Naive thymus-derived CD4-positive, alpha-beta T cell (primary cell): ENCODE measurements at regions of chr11 and their contacts with region 1.

Region 1: DNA sequence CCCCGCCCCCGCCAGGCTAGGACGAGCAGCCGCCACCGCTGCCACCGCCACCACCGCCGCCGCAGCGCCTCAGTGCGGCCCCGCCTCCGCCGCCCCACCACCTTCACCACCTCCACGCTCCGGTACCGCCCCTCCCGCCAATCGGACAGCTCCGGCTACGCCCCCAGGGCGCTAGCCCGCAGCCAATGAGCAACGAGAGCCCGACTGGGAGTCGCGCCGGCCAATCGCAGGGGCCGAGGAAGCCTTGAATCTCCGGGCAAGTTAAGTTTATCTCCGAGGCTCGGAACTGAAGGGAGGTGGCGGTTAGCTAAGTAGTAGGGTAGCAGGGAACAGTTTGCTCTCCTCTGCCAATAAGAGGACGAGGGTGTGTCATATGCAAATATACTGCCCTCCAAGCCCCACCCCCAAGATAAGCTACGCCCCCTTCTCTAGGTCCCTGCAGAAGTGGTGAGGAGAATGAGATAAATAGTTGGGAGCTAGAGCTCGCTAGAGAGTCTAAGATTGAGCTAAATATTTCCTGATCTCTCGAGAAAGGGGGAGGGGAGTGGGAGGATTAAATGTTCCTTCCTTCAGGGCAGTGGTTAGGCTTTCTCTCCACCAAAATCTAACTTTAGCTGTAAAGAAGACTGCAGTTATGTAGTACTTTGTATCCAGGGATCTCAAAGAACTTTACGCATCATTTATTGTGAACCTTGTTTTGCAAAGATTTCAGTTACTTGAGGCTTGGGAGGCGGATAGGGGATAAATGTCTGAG is at the start of gene SESN3:
- DNase-seq: peak; percentile 96 to 100 (median 99)
- ATAC-seq: peak; percentile 92
- H3K4me3 ChIP-seq: peak within 1 kb of the TSS; percentile 82
- H3K4me3 Mint-ChIP-seq: peak within 1 kb of the TSS in 6 of 10 donors; percentile 93 to 98 (median 96)
- H3K27ac ChIP-seq: peak within 1 kb of the TSS; percentile 77
- H3K27ac Mint-ChIP-seq: peak within 1 kb of the TSS; percentile 35 to 97 (median 90)
- H3K4me1 ChIP-seq: peaks cover 16 to 24% of the 10 kb centered on the region in 2 donors
- H3K4me1 Mint-ChIP-seq: peaks cover 37 to 71% (median 50%) of the 10 kb centered on the region in 7 donors
- H3K27me3 ChIP-seq: no peaks in the 10 kb centered on the region
- H3K27me3 Mint-ChIP-seq: peaks cover 0 to 5% (median 0%) of the 10 kb centered on the region in 5 donors
- total RNA-seq, gene SESN3: 77.5 to 262 (median 133) TPM

Region 2: DNA sequence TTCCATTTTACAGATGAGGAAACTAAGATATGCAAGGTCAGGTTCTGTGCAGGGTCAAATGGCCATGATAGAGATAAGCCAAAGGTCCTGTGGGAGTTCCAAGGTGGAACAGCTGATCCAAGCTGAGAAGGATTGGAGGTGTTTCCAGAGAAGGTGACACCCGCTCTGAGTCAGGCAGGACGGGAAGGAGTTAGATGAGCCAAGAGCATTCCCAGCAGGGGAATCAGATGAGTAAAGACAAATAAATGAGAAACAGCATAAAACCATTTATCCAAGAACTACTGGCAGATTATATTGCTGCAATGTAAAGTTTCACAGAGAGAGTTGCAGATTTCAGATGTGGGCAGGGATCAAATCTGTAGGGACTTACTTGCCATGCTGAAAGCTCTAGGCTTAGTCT is 1229.1 kb before region 1 on chr11:
- CTCF ChIA-PET with region 1: no interaction called
- POLR2A ChIA-PET with region 1: no interaction called
- intact Hi-C with region 1: no loop called
- DNase-seq: no peak
- ATAC-seq: no peak
- H3K4me3 ChIP-seq: no peak overlapping the region
- H3K4me3 Mint-ChIP-seq: no peak overlapping the region
- H3K27ac ChIP-seq: no peak overlapping the region
- H3K27ac Mint-ChIP-seq: no peak overlapping the region
- H3K4me1 ChIP-seq: no peaks in the 10 kb centered on the region
- H3K4me1 Mint-ChIP-seq: no peaks in the 10 kb centered on the region
- H3K27me3 ChIP-seq: no peaks in the 10 kb centered on the region
- H3K27me3 Mint-ChIP-seq: peaks cover 0 to 10% (median 9%) of the 10 kb centered on the region in 5 donors

Region 3: GRCh38 chr11:95067039-95067840 is 164.1 kb before region 1 on chr11:
- CTCF ChIA-PET with region 1: no interaction called
- POLR2A ChIA-PET with region 1: interaction called, 22 read pairs
- intact Hi-C with region 1: loop called (anchors 1 kb)
- DNase-seq: peak; percentile 62 to 79 (median 74)
- ATAC-seq: peak; percentile 81
- H3K4me3 ChIP-seq: peak overlapping the region; percentile 87
- H3K4me3 Mint-ChIP-seq: peak overlapping the region; percentile 93 to 100 (median 96)
- H3K27ac ChIP-seq: peak overlapping the region; percentile 96
- H3K27ac Mint-ChIP-seq: peak overlapping the region; percentile 93 to 100 (median 97)
- H3K4me1 ChIP-seq: peaks cover 16 to 17% of the 10 kb centered on the region in 2 donors
- H3K4me1 Mint-ChIP-seq: peaks cover 17 to 38% (median 30%) of the 10 kb centered on the region in 7 donors
- H3K27me3 ChIP-seq: no peaks in the 10 kb centered on the region
- H3K27me3 Mint-ChIP-seq: peaks cover 0 to 23% (median 0%) of the 10 kb centered on the region in 5 donors

Region 4: DNA sequence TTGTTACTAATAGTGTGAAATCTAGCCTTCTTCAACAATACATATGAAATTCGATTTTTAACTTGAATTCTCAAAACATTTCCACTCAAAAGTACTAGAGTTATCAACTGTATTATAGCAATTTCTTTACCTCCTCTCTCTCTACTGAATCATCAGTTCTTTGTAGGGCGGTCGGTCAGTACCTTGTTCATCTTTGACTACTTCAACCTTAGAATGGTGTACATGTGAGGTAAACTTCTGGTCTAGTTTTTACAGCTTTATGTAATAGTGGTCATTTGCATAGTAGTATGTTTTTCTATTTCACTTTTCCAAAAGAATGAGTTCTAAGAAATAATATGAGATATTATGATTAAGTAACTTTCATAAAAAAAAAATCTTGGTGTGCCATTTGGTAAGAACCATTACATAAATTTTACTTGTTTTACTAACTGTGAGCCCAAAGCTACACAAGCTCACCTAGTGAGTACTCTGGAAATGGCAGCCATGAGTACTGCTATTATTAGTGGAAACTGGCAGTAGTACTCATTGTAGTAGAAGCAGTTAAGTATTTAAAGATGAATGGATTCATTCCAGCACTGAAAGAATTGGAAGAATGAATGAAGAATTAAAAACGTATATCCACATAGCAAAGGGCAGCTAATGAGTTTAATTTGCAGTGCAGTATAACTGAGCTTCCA is 30.4 kb before region 1 on chr11:
- CTCF ChIA-PET with region 1: no interaction called
- POLR2A ChIA-PET with region 1: interaction called, 8 read pairs
- intact Hi-C with region 1: loop called in 1 of 2 experiments (anchors 1 kb)
- DNase-seq: no peak
- ATAC-seq: no peak
- H3K4me3 ChIP-seq: no peak overlapping the region
- H3K4me3 Mint-ChIP-seq: peak overlapping the region in 1 of 10 donors; percentile 14
- H3K27ac ChIP-seq: no peak overlapping the region
- H3K27ac Mint-ChIP-seq: peak overlapping the region in 2 of 9 donors; percentile 14 to 68
- H3K4me1 ChIP-seq: peaks cover 0 to 11% of the 10 kb centered on the region in 2 donors
- H3K4me1 Mint-ChIP-seq: peaks cover 17 to 85% (median 66%) of the 10 kb centered on the region in 7 donors
- H3K27me3 ChIP-seq: no peaks in the 10 kb centered on the region
- H3K27me3 Mint-ChIP-seq: no peaks in the 10 kb centered on the region

Region 5: GRCh38 chr11:95296621-95297025 is 65.3 kb after region 1 on chr11:
- CTCF ChIA-PET with region 1: no interaction called
- POLR2A ChIA-PET with region 1: interaction called, 17 read pairs
- intact Hi-C with region 1: loop called (anchors 1 to 5 kb)
- DNase-seq: no peak
- ATAC-seq: peak; percentile 78
- H3K4me3 ChIP-seq: no peak overlapping the region
- H3K4me3 Mint-ChIP-seq: peak overlapping the region in 1 of 10 donors; percentile 5
- H3K27ac ChIP-seq: no peak overlapping the region
- H3K27ac Mint-ChIP-seq: no peak overlapping the region
- H3K4me1 ChIP-seq: peaks cover 0 to 27% of the 10 kb centered on the region in 2 donors
- H3K4me1 Mint-ChIP-seq: peaks cover 26 to 47% (median 32%) of the 10 kb centered on the region in 7 donors
- H3K27me3 ChIP-seq: no peaks in the 10 kb centered on the region
- H3K27me3 Mint-ChIP-seq: peaks cover 0 to 4% (median 0%) of the 10 kb centered on the region in 5 donors

Region 6: DNA sequence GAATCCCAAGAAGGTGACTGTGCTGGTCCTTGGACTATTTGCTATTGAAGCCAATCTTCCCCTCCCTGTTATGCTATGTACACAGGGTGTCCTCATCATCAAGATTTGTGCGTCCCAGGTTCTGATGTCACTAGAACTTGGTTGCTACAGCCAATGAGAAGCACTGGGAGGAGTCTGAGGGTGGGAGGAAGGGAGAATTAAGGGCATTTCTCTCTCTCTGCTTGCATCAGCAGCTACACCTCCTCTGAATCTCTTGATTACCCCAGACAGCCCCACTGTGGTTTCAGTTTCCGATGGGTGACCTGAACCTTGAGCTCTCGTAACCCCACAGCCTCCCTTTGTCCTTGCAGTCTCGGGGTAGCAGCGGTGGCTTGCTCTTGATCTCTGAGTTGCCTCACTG is 212.1 kb after region 1 on chr11:
- CTCF ChIA-PET with region 1: no interaction called
- POLR2A ChIA-PET with region 1: interaction called, 3 read pairs
- intact Hi-C with region 1: loop called in 1 of 2 experiments (anchors 10 kb)
- DNase-seq: no peak
- ATAC-seq: peak; percentile 57
- H3K4me3 ChIP-seq: no peak overlapping the region
- H3K4me3 Mint-ChIP-seq: no peak overlapping the region
- H3K27ac ChIP-seq: no peak overlapping the region
- H3K27ac Mint-ChIP-seq: peak overlapping the region in 2 of 9 donors; percentile 21 to 31
- H3K4me1 ChIP-seq: no peaks in the 10 kb centered on the region
- H3K4me1 Mint-ChIP-seq: peaks cover 7 to 20% (median 12%) of the 10 kb centered on the region in 7 donors
- H3K27me3 ChIP-seq: no peaks in the 10 kb centered on the region
- H3K27me3 Mint-ChIP-seq: no peaks in the 10 kb centered on the region

Region 7: GRCh38 chr11:95699631-95700470 is 468.5 kb after region 1 on chr11:
- CTCF ChIA-PET with region 1: interaction called, 46 read pairs
- POLR2A ChIA-PET with region 1: interaction called, 118 read pairs
- intact Hi-C with region 1: loop called (anchors 1 kb)
- DNase-seq: peak in 7 of 9 donors; percentile 41 to 67 (median 49)
- ATAC-seq: peak; percentile 78
- H3K4me3 ChIP-seq: peak overlapping the region; percentile 36
- H3K4me3 Mint-ChIP-seq: peak overlapping the region; percentile 68 to 87 (median 76)
- H3K27ac ChIP-seq: peak overlapping the region; percentile 85
- H3K27ac Mint-ChIP-seq: peak overlapping the region in 8 of 9 donors; percentile 95 to 99 (median 96)
- H3K4me1 ChIP-seq: peaks cover 42 to 72% of the 10 kb centered on the region in 2 donors
- H3K4me1 Mint-ChIP-seq: peaks cover 32 to 65% (median 61%) of the 10 kb centered on the region in 7 donors
- H3K27me3 ChIP-seq: no peaks in the 10 kb centered on the region
- H3K27me3 Mint-ChIP-seq: no peaks in the 10 kb centered on the region

Region 8: GRCh38 chr11:96389720-96390487 is 1158.6 kb after region 1 on chr11 and contains the starts of genes CCDC82 and JRKL:
- CTCF ChIA-PET with region 1: no interaction called
- POLR2A ChIA-PET with region 1: interaction called, 5 read pairs
- intact Hi-C with region 1: loop called (anchors 1 kb)
- DNase-seq: peak; percentile 96 to 99 (median 98)
- ATAC-seq: peak; percentile 99
- H3K4me3 ChIP-seq: peak within 1 kb of the TSS; percentile 66
- H3K4me3 Mint-ChIP-seq: peak within 1 kb of the TSS; percentile 84 to 99 (median 94)
- H3K27ac ChIP-seq: peak within 1 kb of the TSS; percentile 86
- H3K27ac Mint-ChIP-seq: peak within 1 kb of the TSS; percentile 71 to 97 (median 91)
- H3K4me1 ChIP-seq: peaks cover 17 to 18% of the 10 kb centered on the region in 2 donors
- H3K4me1 Mint-ChIP-seq: peaks cover 32 to 66% (median 60%) of the 10 kb centered on the region in 7 donors
- H3K27me3 ChIP-seq: no peaks in the 10 kb centered on the region
- H3K27me3 Mint-ChIP-seq: no peaks in the 10 kb centered on the region
- total RNA-seq, gene CCDC82: 21.9 to 46.2 (median 32.0) TPM
- total RNA-seq, gene JRKL: 5.4 to 17.3 (median 10.1) TPM